GM10248 (cell line): ENCODE measurements at regions of chr17 and their contacts with region 1.

Region 1: GRCh38 chr17:67629971-67630320 is 87.8 kb upstream of the NOL11 start:
- DNase-seq: peak; percentile 43
- CTCF ChIP-seq: peak; percentile 28

Region 2: GRCh38 chr17:67481808-67482207 is 148.1 kb before region 1 on chr17:
- CTCF ChIA-PET with region 1: no interaction called
- POLR2A ChIA-PET with region 1: no interaction called
- DNase-seq: no peak
- CTCF ChIP-seq: no peak

Region 3: DNA sequence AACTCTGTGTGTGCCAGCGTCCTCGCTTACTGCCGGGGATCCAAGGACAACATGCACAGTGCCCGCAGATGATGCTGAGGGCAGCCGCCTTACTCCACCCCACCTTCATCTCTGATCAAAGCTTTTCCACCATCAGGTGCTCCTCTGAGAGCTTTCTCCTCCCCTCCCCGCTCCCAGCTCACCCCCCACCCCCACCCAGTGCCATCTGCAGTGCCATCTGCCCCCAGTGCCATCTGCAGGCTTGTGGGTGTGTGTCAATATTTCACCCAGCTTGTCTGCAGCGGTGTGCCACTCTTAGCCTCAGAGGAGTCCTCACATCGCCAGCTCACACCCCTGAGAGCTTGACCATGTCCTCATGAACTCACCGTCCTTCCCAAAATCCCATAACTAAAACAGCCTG is 10.4 kb before region 1 on chr17:
- CTCF ChIA-PET with region 1: interaction called, 12 read pairs
- POLR2A ChIA-PET with region 1: no interaction called
- DNase-seq: no peak
- CTCF ChIP-seq: no peak

Region 4: DNA sequence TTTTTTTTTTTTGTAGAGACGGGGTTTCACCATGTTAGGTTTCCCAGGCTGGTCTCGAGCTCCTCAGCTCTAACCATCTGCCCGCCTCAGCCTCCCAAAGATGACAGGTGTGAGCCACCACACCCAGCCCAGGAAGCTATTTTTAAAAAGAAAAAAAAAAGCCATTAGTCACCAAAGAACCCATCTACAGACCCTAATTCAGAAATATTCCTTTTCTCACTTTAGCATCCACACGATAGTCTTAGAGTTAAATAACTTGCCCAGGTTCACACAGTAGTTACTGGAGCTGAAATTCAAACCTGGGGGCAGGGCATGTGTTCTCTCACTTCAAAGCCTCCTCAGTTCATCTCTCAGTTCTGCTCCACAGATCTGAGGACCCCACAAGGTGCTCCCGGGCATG is 17.5 kb after region 1 on chr17:
- CTCF ChIA-PET with region 1: interaction called, 68 read pairs
- POLR2A ChIA-PET with region 1: no interaction called
- DNase-seq: no peak
- CTCF ChIP-seq: no peak